MCF 10A (cell line): ENCODE measurements at regions of chr1 and their contacts with region 1.

Region 1: DNA sequence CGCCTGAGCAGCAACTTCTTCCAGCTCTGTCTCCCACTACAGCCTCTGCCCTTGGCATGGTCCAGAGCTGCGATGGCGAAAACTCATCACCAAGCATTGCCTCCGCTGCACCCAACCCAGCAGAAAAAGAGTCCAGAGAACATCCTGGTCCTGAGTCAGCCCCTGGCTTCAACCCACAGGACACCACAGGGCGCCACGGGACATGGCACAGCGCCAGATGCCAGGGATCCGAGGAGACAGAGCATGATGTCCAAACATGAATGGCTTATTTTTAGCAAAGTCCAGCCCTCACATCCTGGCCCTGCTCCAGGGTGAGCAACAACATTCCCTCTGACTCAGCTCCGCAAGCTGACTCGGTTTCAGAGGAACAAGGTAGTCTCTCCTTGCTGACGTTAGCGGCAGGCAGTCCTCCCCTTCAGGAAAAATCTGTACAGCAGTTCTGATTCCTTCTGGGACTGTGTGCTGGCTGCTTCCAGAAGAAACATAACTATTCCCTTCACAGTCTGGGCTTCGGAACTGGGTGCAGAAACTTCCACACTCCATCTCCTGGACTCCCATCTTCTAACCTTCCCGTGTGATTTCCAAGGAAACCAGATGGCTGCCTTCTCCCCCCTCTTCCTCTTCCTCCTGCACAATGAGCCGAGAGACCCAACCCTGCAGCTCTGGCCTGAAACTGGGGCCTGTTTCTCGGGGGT is 131.3 kb downstream of the TOMM20 start:
- DNase-seq: peak; percentile 100
- H3K4me3 Mint-ChIP-seq: peak overlapping the region; percentile 58
- H3K27ac Mint-ChIP-seq: peak overlapping the region; percentile 93
- H3K4me1 Mint-ChIP-seq: peaks cover 26% of the 10 kb centered on the region
- H3K27me3 Mint-ChIP-seq: no peaks in the 10 kb centered on the region
- CTCF ChIP-seq: no peak

Region 2: GRCh38 chr1:234533975-234534876 is 463.1 kb before region 1 on chr1:
- CTCF ChIA-PET with region 1: no interaction called
- POLR2A ChIA-PET with region 1: interaction called, 21 read pairs
- intact Hi-C with region 1: no loop called
- DNase-seq: peak; percentile 100
- H3K4me3 Mint-ChIP-seq: peak overlapping the region; percentile 31
- H3K27ac Mint-ChIP-seq: peak overlapping the region; percentile 93
- H3K4me1 Mint-ChIP-seq: peaks cover 43% of the 10 kb centered on the region
- H3K27me3 Mint-ChIP-seq: no peaks in the 10 kb centered on the region
- CTCF ChIP-seq: no peak

Region 3: DNA sequence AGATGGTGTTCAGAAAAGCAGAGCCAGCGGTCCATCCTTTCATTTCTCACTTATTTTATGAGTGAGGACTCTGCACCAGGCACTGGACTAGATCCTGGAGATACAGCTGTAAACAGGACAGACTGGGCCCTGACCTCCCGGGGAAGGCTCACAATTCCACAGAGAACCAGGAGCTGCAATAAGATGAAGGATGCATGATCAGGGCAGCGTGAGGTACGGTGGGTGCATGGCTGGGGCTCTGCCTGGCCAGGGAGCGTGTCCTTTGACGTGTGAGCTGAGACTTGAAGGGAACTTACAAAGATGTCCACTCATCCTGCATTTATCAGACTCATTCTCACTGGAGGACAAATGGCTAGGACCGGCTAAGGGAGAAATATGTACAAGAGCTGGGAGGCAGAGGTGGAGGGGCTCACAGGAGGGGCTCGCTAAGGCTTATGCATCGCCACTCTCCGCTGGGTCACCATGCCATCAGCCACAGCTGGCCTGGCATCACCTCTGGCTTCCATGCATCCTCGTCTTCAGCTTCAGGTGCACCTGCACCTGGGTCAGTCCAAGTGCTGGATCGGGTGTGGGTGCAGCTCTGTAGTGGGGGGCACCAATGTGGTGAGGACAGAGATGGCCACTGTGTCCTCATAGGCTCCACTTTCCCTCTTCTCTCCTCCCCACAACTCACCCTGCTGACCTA is 82.6 kb before region 1 on chr1:
- CTCF ChIA-PET with region 1: no interaction called
- POLR2A ChIA-PET with region 1: no interaction called
- intact Hi-C with region 1: no loop called
- DNase-seq: no peak
- H3K4me3 Mint-ChIP-seq: no peak overlapping the region
- H3K27ac Mint-ChIP-seq: no peak overlapping the region
- H3K4me1 Mint-ChIP-seq: no peaks in the 10 kb centered on the region
- H3K27me3 Mint-ChIP-seq: no peaks in the 10 kb centered on the region
- CTCF ChIP-seq: no peak

Region 4: GRCh38 chr1:234925440-234926263 is 71.7 kb before region 1 on chr1:
- CTCF ChIA-PET with region 1: interaction called, 3 read pairs
- POLR2A ChIA-PET with region 1: interaction called, 13 read pairs
- intact Hi-C with region 1: loop called (anchors 1 kb)
- DNase-seq: peak; percentile 92
- H3K4me3 Mint-ChIP-seq: peak overlapping the region; percentile 26
- H3K27ac Mint-ChIP-seq: peak overlapping the region; percentile 83
- H3K4me1 Mint-ChIP-seq: peaks cover 20% of the 10 kb centered on the region
- H3K27me3 Mint-ChIP-seq: no peaks in the 10 kb centered on the region
- CTCF ChIP-seq: no peak

Region 5: GRCh38 chr1:234970731-234971476 is 26.4 kb before region 1 on chr1:
- CTCF ChIA-PET with region 1: interaction called, 4 read pairs
- POLR2A ChIA-PET with region 1: interaction called, 23 read pairs
- intact Hi-C with region 1: no loop called
- DNase-seq: peak; percentile 53
- H3K4me3 Mint-ChIP-seq: no peak overlapping the region
- H3K27ac Mint-ChIP-seq: peak overlapping the region; percentile 26
- H3K4me1 Mint-ChIP-seq: peaks cover 41% of the 10 kb centered on the region
- H3K27me3 Mint-ChIP-seq: no peaks in the 10 kb centered on the region
- CTCF ChIP-seq: no peak

Region 6: GRCh38 chr1:235018161-235018560 is 20.8 kb after region 1 on chr1:
- CTCF ChIA-PET with region 1: interaction called, 14 read pairs
- POLR2A ChIA-PET with region 1: interaction called, 53 read pairs
- intact Hi-C with region 1: loop called (anchors 1 kb)
- DNase-seq: peak; percentile 100
- H3K4me3 Mint-ChIP-seq: no peak overlapping the region
- H3K27ac Mint-ChIP-seq: peak overlapping the region; percentile 0
- H3K4me1 Mint-ChIP-seq: peaks cover 25% of the 10 kb centered on the region
- H3K27me3 Mint-ChIP-seq: no peaks in the 10 kb centered on the region
- CTCF ChIP-seq: no peak

Region 7: GRCh38 chr1:235075188-235075926 is 78.0 kb after region 1 on chr1:
- CTCF ChIA-PET with region 1: interaction called, 21 read pairs
- POLR2A ChIA-PET with region 1: interaction called, 60 read pairs
- intact Hi-C with region 1: no loop called
- DNase-seq: peak; percentile 92
- H3K4me3 Mint-ChIP-seq: no peak overlapping the region
- H3K27ac Mint-ChIP-seq: peak overlapping the region; percentile 52
- H3K4me1 Mint-ChIP-seq: peaks cover 30% of the 10 kb centered on the region
- H3K27me3 Mint-ChIP-seq: no peaks in the 10 kb centered on the region
- CTCF ChIP-seq: no peak